T-cell (primary cell): ENCODE measurements at regions of chr19 and their contacts with region 1.

Region 1: GRCh38 chr19:49894879-49895565 is 1.7 kb downstream of the IL4I1 start:
- DNase-seq: peak in 5 of 35 experiments; percentile 20 to 49 (median 27)
- ATAC-seq: no peak
- H3K4me3 ChIP-seq: peak overlapping the region in 1 of 2 donors; percentile 3
- H3K4me3 Mint-ChIP-seq: peak overlapping the region in 2 of 3 donors; percentile 17 to 72
- H3K27ac ChIP-seq: peak overlapping the region; percentile 100
- H3K27ac Mint-ChIP-seq: peak overlapping the region; percentile 81 to 93
- H3K4me1 ChIP-seq: peaks cover 11 to 50% of the 10 kb centered on the region in 2 experiments
- H3K4me1 Mint-ChIP-seq: peaks cover 28 to 46% (median 30%) of the 10 kb centered on the region in 3 donors
- H3K27me3 ChIP-seq: peaks cover 0 to 3% of the 10 kb centered on the region in 2 experiments
- H3K27me3 Mint-ChIP-seq: no peaks in the 10 kb centered on the region

Region 2: GRCh38 chr19:49808711-49809159 is 86.3 kb before region 1 on chr19:
- CTCF ChIA-PET with region 1: no interaction called
- POLR2A ChIA-PET with region 1: no interaction called
- DNase-seq: peak; percentile 56 to 89 (median 80)
- ATAC-seq: peak; percentile 30 to 53 (median 44)
- H3K4me3 ChIP-seq: peak overlapping the region; percentile 61 to 71
- H3K4me3 Mint-ChIP-seq: peak overlapping the region; percentile 73 to 90 (median 85)
- H3K27ac ChIP-seq: peak overlapping the region; percentile 61
- H3K27ac Mint-ChIP-seq: peak overlapping the region; percentile 55 to 68
- H3K4me1 ChIP-seq: peaks cover 0 to 35% of the 10 kb centered on the region in 2 experiments
- H3K4me1 Mint-ChIP-seq: peaks cover 32 to 46% (median 34%) of the 10 kb centered on the region in 3 donors
- H3K27me3 ChIP-seq: peaks cover 0 to 5% of the 10 kb centered on the region in 2 experiments
- H3K27me3 Mint-ChIP-seq: no peaks in the 10 kb centered on the region

Region 3: DNA sequence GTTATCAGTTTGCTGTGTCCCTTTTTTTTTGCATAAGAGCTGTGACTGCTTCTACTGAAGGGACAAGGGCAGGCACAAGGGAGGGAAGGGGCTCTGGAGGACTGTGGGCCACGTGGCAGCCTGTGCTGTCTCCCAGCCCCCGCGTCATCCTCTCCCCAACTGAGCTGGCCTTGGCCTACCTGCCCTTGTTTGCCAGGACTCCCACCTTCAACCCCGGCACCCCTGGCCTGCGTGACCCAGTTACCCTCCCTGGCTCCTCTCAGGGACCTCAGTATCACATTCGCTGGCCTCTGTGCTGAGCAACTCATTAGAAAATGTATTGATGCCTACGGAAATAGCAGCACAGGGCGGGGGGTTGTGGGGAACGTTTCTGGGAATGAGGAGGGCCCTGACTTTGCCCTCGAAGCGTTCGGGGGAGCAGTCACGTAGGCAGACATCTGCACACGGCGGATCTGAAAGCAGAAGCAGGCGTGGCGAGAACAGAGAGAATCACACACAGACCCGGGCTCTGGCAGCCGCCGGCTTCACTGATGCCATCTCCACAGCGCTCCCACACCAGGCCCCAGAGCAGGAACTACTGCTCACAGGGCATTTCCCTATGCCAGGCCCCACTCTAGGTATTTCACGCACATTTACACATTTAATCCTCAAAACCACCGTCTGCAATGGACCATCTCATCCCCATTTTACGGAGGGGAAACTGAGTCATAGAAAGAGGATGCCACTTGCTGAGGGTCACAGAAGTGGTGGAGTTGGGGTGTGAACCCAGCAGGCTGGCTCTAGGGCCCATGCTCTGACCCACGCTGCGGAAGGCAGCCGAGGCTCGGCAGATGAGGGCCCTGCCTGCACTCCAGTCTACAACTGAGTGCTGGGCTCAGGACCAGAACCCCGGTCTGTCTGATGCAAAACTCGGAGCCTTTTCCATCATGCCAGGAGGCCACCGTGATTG is 28.3 kb after region 1 on chr19:
- CTCF ChIA-PET with region 1: no interaction called
- POLR2A ChIA-PET with region 1: no interaction called
- DNase-seq: peak in 1 of 35 experiments; percentile 21
- ATAC-seq: no peak
- H3K4me3 ChIP-seq: no peak overlapping the region
- H3K4me3 Mint-ChIP-seq: no peak overlapping the region
- H3K27ac ChIP-seq: no peak overlapping the region
- H3K27ac Mint-ChIP-seq: no peak overlapping the region
- H3K4me1 ChIP-seq: peaks cover 6 to 64% of the 10 kb centered on the region in 2 experiments
- H3K4me1 Mint-ChIP-seq: peaks cover 28 to 56% (median 48%) of the 10 kb centered on the region in 3 donors
- H3K27me3 ChIP-seq: no peaks in the 10 kb centered on the region
- H3K27me3 Mint-ChIP-seq: no peaks in the 10 kb centered on the region

Region 4: GRCh38 chr19:49939721-49940481 is 44.9 kb after region 1 on chr19:
- CTCF ChIA-PET with region 1: interaction called in 1 of 2 experiments, 12 read pairs
- POLR2A ChIA-PET with region 1: no interaction called
- DNase-seq: no peak
- ATAC-seq: peak in 1 of 4 experiments; percentile 27
- H3K4me3 ChIP-seq: no peak overlapping the region
- H3K4me3 Mint-ChIP-seq: no peak overlapping the region
- H3K27ac ChIP-seq: no peak overlapping the region
- H3K27ac Mint-ChIP-seq: no peak overlapping the region
- H3K4me1 ChIP-seq: peaks cover 5 to 15% of the 10 kb centered on the region in 2 experiments
- H3K4me1 Mint-ChIP-seq: peaks cover 6 to 9% (median 7%) of the 10 kb centered on the region in 3 donors
- H3K27me3 ChIP-seq: peaks cover 0 to 7% of the 10 kb centered on the region in 2 experiments
- H3K27me3 Mint-ChIP-seq: peaks cover 5 to 9% of the 10 kb centered on the region in 2 donors

Region 5: GRCh38 chr19:49954079-49954829 is 59.2 kb after region 1 on chr19:
- CTCF ChIA-PET with region 1: no interaction called
- POLR2A ChIA-PET with region 1: no interaction called
- DNase-seq: no peak
- ATAC-seq: no peak
- H3K4me3 ChIP-seq: no peak overlapping the region
- H3K4me3 Mint-ChIP-seq: no peak overlapping the region
- H3K27ac ChIP-seq: no peak overlapping the region
- H3K27ac Mint-ChIP-seq: no peak overlapping the region
- H3K4me1 ChIP-seq: no peaks in the 10 kb centered on the region
- H3K4me1 Mint-ChIP-seq: peaks cover 2 to 6% (median 6%) of the 10 kb centered on the region in 3 donors
- H3K27me3 ChIP-seq: peaks cover 0 to 47% of the 10 kb centered on the region in 2 experiments
- H3K27me3 Mint-ChIP-seq: peaks cover 26 to 33% of the 10 kb centered on the region in 2 donors